Caco-2 (cell line): ENCODE measurements at regions of chr21 and their contacts with region 1.

Region 1: GRCh38 chr21:35974818-35975217 is 85.5 kb downstream of the SETD4 start:
- DNase-seq: peak; percentile 79 to 84
- H3K4me3 ChIP-seq: no peak overlapping the region
- H3K4me3 Mint-ChIP-seq: peak overlapping the region; percentile 62
- H3K27ac Mint-ChIP-seq: peak overlapping the region; percentile 78
- H3K4me1 ChIP-seq: peaks cover 35% of the 10 kb centered on the region
- H3K4me1 Mint-ChIP-seq: peaks cover 21% of the 10 kb centered on the region
- H3K27me3 ChIP-seq: no peaks in the 10 kb centered on the region
- H3K27me3 Mint-ChIP-seq: no peaks in the 10 kb centered on the region
- CTCF ChIP-seq: no peak

Region 2: DNA sequence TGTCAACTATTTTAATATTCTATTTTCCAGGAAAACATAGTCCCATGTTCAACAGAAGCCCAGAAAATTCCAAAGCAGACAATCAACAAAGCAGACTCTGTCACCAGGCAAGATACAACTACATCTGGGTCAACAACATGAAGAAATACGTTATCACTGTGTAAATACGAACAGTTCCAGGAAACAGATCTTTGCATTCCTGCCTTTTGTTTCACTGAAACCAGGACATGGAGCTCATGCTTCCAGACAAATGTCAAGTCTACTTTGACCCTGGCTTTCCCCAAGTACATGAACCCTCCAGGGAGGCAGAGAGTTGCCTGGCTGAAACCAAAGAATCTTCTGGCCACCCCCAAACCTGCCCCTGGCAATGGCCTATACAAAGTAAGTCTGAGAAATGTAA is 21.2 kb before region 1 on chr21:
- CTCF ChIA-PET with region 1: interaction called, 8 read pairs
- POLR2A ChIA-PET with region 1: interaction called, 5 read pairs
- intact Hi-C with region 1: loop called (anchors 1 kb)
- DNase-seq: peak; percentile 83 to 85
- H3K4me3 ChIP-seq: no peak overlapping the region
- H3K4me3 Mint-ChIP-seq: no peak overlapping the region
- H3K27ac Mint-ChIP-seq: peak overlapping the region; percentile 91
- H3K4me1 ChIP-seq: peaks cover 72% of the 10 kb centered on the region
- H3K4me1 Mint-ChIP-seq: peaks cover 26% of the 10 kb centered on the region
- H3K27me3 ChIP-seq: no peaks in the 10 kb centered on the region
- H3K27me3 Mint-ChIP-seq: no peaks in the 10 kb centered on the region
- CTCF ChIP-seq: no peak

Region 3: GRCh38 chr21:36260030-36260787 is 285.4 kb after region 1 on chr21:
- CTCF ChIA-PET with region 1: no interaction called
- POLR2A ChIA-PET with region 1: no interaction called
- intact Hi-C with region 1: no loop called
- DNase-seq: peak in 1 of 2 experiments; percentile 61
- H3K4me3 ChIP-seq: peak overlapping the region; percentile 26; the same call in 1 of the 2 replicates
- H3K4me3 Mint-ChIP-seq: peak overlapping the region; percentile 68
- H3K27ac Mint-ChIP-seq: peak overlapping the region; percentile 48
- H3K4me1 ChIP-seq: peaks cover 6% of the 10 kb centered on the region; the same call in 1 of the 2 replicates
- H3K4me1 Mint-ChIP-seq: peaks cover 7% of the 10 kb centered on the region
- H3K27me3 ChIP-seq: no peaks in the 10 kb centered on the region
- H3K27me3 Mint-ChIP-seq: no peaks in the 10 kb centered on the region
- CTCF ChIP-seq: peak; percentile 70 to 79